A673 (cell line): ENCODE measurements at regions of chr12 and their contacts with region 1.

Region 1: DNA sequence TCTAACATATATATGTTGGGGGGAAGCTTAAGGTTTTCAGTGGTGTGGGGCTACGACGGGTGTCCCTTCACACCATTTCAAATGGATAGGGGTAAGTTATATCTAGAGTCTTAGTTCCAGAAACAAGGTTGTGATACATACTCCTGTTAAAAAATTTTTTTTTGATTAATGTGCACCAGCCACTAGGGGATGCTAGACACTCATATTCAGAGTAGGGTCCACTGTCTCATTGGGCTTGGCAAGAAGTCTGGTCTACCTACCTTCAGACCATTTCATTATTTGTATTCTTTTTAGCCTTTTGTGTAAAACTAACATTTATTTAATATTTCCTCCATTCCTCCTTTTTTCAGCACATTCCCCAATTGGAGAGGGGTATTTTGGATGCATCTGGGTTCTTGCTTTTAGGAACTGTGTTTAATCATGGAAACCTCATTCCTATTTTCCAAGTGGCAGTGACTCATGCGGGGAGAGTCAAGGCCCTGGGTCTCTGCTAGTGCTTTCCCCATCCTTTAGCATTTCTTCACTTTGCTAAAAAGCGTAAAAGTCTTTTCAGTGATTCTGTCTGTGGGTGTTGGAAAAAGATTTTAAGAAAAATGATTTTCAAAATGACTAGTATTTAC is 33.4 kb downstream of the ANO4 start:
- DNase-seq: peak; percentile 67
- H3K4me3 ChIP-seq: no peak overlapping the region
- H3K27ac ChIP-seq: no peak overlapping the region
- H3K4me1 ChIP-seq: peaks cover 26% of the 10 kb centered on the region
- H3K27me3 ChIP-seq: no peaks in the 10 kb centered on the region
- CTCF ChIP-seq: peak; percentile 78

Region 2: GRCh38 chr12:100020370-100020769 is 807.6 kb before region 1 on chr12:
- CTCF ChIA-PET with region 1: no interaction called
- POLR2A ChIA-PET with region 1: no interaction called
- intact Hi-C with region 1: no loop called
- DNase-seq: no peak
- H3K4me3 ChIP-seq: no peak overlapping the region
- H3K27ac ChIP-seq: no peak overlapping the region
- H3K4me1 ChIP-seq: no peaks in the 10 kb centered on the region
- H3K27me3 ChIP-seq: no peaks in the 10 kb centered on the region
- CTCF ChIP-seq: no peak

Region 3: GRCh38 chr12:100967189-100967588 is 139.2 kb after region 1 on chr12:
- CTCF ChIA-PET with region 1: no interaction called
- POLR2A ChIA-PET with region 1: no interaction called
- intact Hi-C with region 1: loop called (anchors 5 kb)
- DNase-seq: peak; percentile 79
- H3K4me3 ChIP-seq: no peak overlapping the region
- H3K27ac ChIP-seq: peak overlapping the region; percentile 63
- H3K4me1 ChIP-seq: peaks cover 47% of the 10 kb centered on the region
- H3K27me3 ChIP-seq: no peaks in the 10 kb centered on the region
- CTCF ChIP-seq: no peak

Region 4: GRCh38 chr12:100987552-100988521 is 159.8 kb after region 1 on chr12:
- CTCF ChIA-PET with region 1: no interaction called
- POLR2A ChIA-PET with region 1: interaction called, 4 read pairs
- intact Hi-C with region 1: loop called (anchors 5 kb)
- DNase-seq: peak; percentile 83
- H3K4me3 ChIP-seq: no peak overlapping the region
- H3K27ac ChIP-seq: peak overlapping the region; percentile 9
- H3K4me1 ChIP-seq: peaks cover 27% of the 10 kb centered on the region
- H3K27me3 ChIP-seq: no peaks in the 10 kb centered on the region
- CTCF ChIP-seq: peak; percentile 80

Region 5: GRCh38 chr12:101280006-101280505 is 452.0 kb after region 1 on chr12 and contains the start of gene UTP20:
- CTCF ChIA-PET with region 1: no interaction called
- POLR2A ChIA-PET with region 1: no interaction called
- intact Hi-C with region 1: loop called (anchors 10 kb)
- DNase-seq: peak; percentile 92
- H3K4me3 ChIP-seq: peak within 1 kb of the TSS; percentile 66
- H3K27ac ChIP-seq: peak within 1 kb of the TSS; percentile 46
- H3K4me1 ChIP-seq: peaks cover 7% of the 10 kb centered on the region
- H3K27me3 ChIP-seq: no peaks in the 10 kb centered on the region
- CTCF ChIP-seq: no peak
- total RNA-seq, gene UTP20: 41.9 and 53.5 TPM in 2 replicates

Region 6: GRCh38 chr12:101323255-101323654 is 495.2 kb after region 1 on chr12:
- CTCF ChIA-PET with region 1: no interaction called
- POLR2A ChIA-PET with region 1: no interaction called
- intact Hi-C with region 1: loop called (anchors 2 kb)
- DNase-seq: no peak
- H3K4me3 ChIP-seq: no peak overlapping the region
- H3K27ac ChIP-seq: no peak overlapping the region
- H3K4me1 ChIP-seq: no peaks in the 10 kb centered on the region
- H3K27me3 ChIP-seq: no peaks in the 10 kb centered on the region
- CTCF ChIP-seq: no peak